ENCODE measurements at regions of chr6 and their contacts with region 1.

Region 1: GRCh38 chr6:87832025-87832825 is 130.2 kb upstream of the AKIRIN2 start:
- DNase-seq: no peak
- H3K4me3 ChIP-seq: peak overlapping the region; percentile 27 to 51 (median 42)
- H3K27ac ChIP-seq: peak overlapping the region in 3 of 4 donors; percentile 22 to 54 (median 36)
- H3K4me1 ChIP-seq: peaks cover 0 to 3% (median 0%) of the 10 kb centered on the region in 4 donors
- H3K27me3 ChIP-seq: no peaks in the 10 kb centered on the region
- CTCF ChIP-seq: peak in 3 of 4 experiments; percentile 19 to 48 (median 19)
- EP300 ChIP-seq: no peak
- POLR2A ChIP-seq: no peak

Region 2: DNA sequence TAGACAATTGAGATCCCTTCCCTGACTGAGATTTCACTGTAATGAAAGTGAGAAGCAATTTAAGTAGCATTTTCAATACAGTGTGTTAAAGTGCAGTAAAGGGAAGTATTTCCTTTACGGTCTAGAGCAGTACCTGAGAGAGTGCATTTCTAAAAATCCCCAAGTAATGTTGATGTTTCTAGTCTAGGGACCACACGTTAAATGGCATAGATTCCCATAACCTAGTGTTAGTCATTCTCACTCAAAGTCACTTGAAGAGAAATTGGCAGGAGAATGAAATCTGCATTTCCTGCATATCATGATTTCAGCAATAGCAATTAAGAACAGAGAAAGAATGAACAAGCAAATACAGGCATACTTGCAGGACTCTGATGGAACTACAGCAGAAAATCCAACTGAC is 805.2 kb before region 1 on chr6:
- intact Hi-C with region 1: no loop called
- DNase-seq: no peak
- H3K4me3 ChIP-seq: no peak overlapping the region
- H3K27ac ChIP-seq: no peak overlapping the region
- H3K4me1 ChIP-seq: no peaks in the 10 kb centered on the region
- H3K27me3 ChIP-seq: no peaks in the 10 kb centered on the region
- CTCF ChIP-seq: no peak
- EP300 ChIP-seq: no peak
- POLR2A ChIP-seq: no peak

Region 3: GRCh38 chr6:87297115-87297514 is 535.1 kb before region 1 on chr6:
- intact Hi-C with region 1: no loop called
- DNase-seq: no peak
- H3K4me3 ChIP-seq: no peak overlapping the region
- H3K27ac ChIP-seq: no peak overlapping the region
- H3K4me1 ChIP-seq: no peaks in the 10 kb centered on the region
- H3K27me3 ChIP-seq: no peaks in the 10 kb centered on the region
- CTCF ChIP-seq: no peak
- EP300 ChIP-seq: no peak
- POLR2A ChIP-seq: no peak

Region 4: GRCh38 chr6:88072462-88072861 is 240.2 kb after region 1 on chr6:
- intact Hi-C with region 1: no loop called
- DNase-seq: no peak
- H3K4me3 ChIP-seq: no peak overlapping the region
- H3K27ac ChIP-seq: no peak overlapping the region
- H3K4me1 ChIP-seq: no peaks in the 10 kb centered on the region
- H3K27me3 ChIP-seq: no peaks in the 10 kb centered on the region
- CTCF ChIP-seq: no peak
- EP300 ChIP-seq: no peak
- POLR2A ChIP-seq: no peak

Region 5: DNA sequence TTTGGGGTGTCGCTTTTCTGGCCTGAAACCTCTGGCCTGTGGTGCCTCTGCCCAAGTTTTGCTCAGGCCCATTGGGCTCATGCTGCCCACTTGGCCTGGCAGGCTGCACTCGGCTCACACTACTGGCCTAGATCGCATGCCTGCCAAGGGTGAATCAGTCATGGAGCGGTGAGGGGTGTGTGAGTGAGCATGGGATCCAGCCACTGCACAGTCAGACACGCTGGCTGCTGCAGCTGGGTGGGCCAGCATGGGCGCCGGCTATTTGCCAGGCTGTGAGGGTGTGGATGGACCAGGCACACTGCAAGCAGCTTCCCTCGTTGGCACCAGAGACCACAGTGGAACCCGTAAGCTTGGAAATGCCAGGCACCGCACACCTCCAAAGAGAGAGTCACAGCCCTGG is 479.3 kb after region 1 on chr6:
- intact Hi-C with region 1: no loop called
- DNase-seq: no peak
- H3K4me3 ChIP-seq: no peak overlapping the region
- H3K27ac ChIP-seq: no peak overlapping the region
- H3K4me1 ChIP-seq: no peaks in the 10 kb centered on the region
- H3K27me3 ChIP-seq: no peaks in the 10 kb centered on the region
- CTCF ChIP-seq: no peak
- EP300 ChIP-seq: no peak
- POLR2A ChIP-seq: no peak

Region 6: GRCh38 chr6:88780714-88781389 is 948.6 kb after region 1 on chr6:
- intact Hi-C with region 1: loop called (anchors 5 kb)
- DNase-seq: peak; percentile 65
- H3K4me3 ChIP-seq: no peak overlapping the region
- H3K27ac ChIP-seq: no peak overlapping the region
- H3K4me1 ChIP-seq: no peaks in the 10 kb centered on the region
- H3K27me3 ChIP-seq: no peaks in the 10 kb centered on the region
- CTCF ChIP-seq: peak; percentile 30 to 82 (median 54)
- EP300 ChIP-seq: no peak
- POLR2A ChIP-seq: no peak

Region 7: GRCh38 chr6:88870717-88871330 is 1038.6 kb after region 1 on chr6:
- intact Hi-C with region 1: loop called (anchors 5 kb)
- DNase-seq: no peak
- H3K4me3 ChIP-seq: no peak overlapping the region
- H3K27ac ChIP-seq: no peak overlapping the region
- H3K4me1 ChIP-seq: peaks cover 0 to 3% (median 1%) of the 10 kb centered on the region in 4 donors
- H3K27me3 ChIP-seq: no peaks in the 10 kb centered on the region
- CTCF ChIP-seq: peak in 3 of 4 experiments; percentile 48 to 60 (median 54)
- EP300 ChIP-seq: no peak
- POLR2A ChIP-seq: no peak